ENCODE measurements at regions of chr16 and their contacts with region 1.

Region 1: GRCh38 chr16:57519796-57520360 is 16.5 kb downstream of the CCDC102A start:
- DNase-seq: peak; percentile 83
- H3K4me3 ChIP-seq: no peak overlapping the region
- H3K27ac ChIP-seq: no peak overlapping the region
- H3K4me1 ChIP-seq: no peaks in the 10 kb centered on the region
- H3K27me3 ChIP-seq: no peaks in the 10 kb centered on the region
- CTCF ChIP-seq: peak; percentile 98

Region 2: DNA sequence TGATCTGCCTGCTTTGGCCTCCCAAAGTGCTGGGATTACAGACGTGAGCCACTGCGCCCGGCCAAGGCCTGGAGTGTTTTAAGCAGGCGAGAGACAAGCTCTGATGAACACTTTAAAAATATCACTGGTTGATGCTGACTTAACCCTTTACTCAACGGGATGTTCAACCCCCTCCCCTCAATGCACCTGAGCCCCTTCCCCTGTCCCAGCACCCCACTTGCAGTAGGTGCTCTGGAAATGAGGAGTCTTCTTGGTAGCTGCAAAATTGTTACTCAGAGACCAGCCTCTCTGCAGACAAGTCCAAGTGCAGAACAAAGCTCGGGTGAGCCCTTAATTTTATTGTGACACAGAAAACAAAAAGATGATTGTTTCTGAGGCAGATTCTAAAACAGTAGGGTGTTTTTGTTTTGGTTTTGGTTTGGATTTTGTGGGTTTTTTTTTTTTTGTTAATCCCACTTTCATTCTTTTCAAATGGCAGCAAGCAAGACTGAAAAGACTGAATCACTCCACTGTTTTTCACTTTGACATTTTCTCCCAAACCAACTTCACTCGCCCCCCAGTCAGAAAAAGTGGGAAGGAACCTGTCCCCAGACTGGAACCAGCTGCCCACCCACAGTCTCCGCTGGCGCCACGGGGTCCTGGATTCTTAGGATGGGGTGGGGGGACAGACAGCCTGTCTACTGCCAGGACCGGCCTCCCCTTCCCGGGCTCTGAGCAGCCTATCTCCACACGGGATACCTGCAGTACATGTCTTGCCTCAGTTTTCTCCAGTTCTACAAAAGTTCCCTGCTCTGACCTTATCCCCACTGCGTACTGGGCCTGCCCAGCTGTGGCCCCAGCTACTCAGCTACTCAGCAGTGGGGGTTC is 230.3 kb before region 1 on chr16:
- intact Hi-C with region 1: no loop called
- DNase-seq: no peak
- H3K4me3 ChIP-seq: no peak overlapping the region
- H3K27ac ChIP-seq: no peak overlapping the region
- H3K4me1 ChIP-seq: no peaks in the 10 kb centered on the region
- H3K27me3 ChIP-seq: no peaks in the 10 kb centered on the region
- CTCF ChIP-seq: no peak

Region 3: GRCh38 chr16:57300387-57301125 is 219.3 kb before region 1 on chr16:
- intact Hi-C with region 1: loop called (anchors 5 kb)
- DNase-seq: peak; percentile 99
- H3K4me3 ChIP-seq: peak overlapping the region; percentile 30
- H3K27ac ChIP-seq: peak overlapping the region; percentile 92
- H3K4me1 ChIP-seq: peaks cover 10% of the 10 kb centered on the region
- H3K27me3 ChIP-seq: no peaks in the 10 kb centered on the region
- CTCF ChIP-seq: peak; percentile 84

Region 4: GRCh38 chr16:57422026-57422944 is 97.6 kb before region 1 on chr16:
- intact Hi-C with region 1: loop called (anchors 2 kb)
- DNase-seq: peak; percentile 59
- H3K4me3 ChIP-seq: no peak overlapping the region
- H3K27ac ChIP-seq: no peak overlapping the region
- H3K4me1 ChIP-seq: no peaks in the 10 kb centered on the region
- H3K27me3 ChIP-seq: no peaks in the 10 kb centered on the region
- CTCF ChIP-seq: peak; percentile 48

Region 5: GRCh38 chr16:57469917-57470470 is 49.9 kb before region 1 on chr16:
- intact Hi-C with region 1: loop called (anchors 5 kb)
- DNase-seq: no peak
- H3K4me3 ChIP-seq: no peak overlapping the region
- H3K27ac ChIP-seq: peak overlapping the region; percentile 62
- H3K4me1 ChIP-seq: peaks cover 11% of the 10 kb centered on the region
- H3K27me3 ChIP-seq: no peaks in the 10 kb centered on the region
- CTCF ChIP-seq: no peak